Posterior vena cava (tissue), 2 donors: ENCODE measurements at regions of chr16 and their contacts with region 1.

Region 1: GRCh38 chr16:23784811-23785447 is 30.1 kb downstream of the CHP2 start:
- DNase-seq: no peak

Region 2: DNA sequence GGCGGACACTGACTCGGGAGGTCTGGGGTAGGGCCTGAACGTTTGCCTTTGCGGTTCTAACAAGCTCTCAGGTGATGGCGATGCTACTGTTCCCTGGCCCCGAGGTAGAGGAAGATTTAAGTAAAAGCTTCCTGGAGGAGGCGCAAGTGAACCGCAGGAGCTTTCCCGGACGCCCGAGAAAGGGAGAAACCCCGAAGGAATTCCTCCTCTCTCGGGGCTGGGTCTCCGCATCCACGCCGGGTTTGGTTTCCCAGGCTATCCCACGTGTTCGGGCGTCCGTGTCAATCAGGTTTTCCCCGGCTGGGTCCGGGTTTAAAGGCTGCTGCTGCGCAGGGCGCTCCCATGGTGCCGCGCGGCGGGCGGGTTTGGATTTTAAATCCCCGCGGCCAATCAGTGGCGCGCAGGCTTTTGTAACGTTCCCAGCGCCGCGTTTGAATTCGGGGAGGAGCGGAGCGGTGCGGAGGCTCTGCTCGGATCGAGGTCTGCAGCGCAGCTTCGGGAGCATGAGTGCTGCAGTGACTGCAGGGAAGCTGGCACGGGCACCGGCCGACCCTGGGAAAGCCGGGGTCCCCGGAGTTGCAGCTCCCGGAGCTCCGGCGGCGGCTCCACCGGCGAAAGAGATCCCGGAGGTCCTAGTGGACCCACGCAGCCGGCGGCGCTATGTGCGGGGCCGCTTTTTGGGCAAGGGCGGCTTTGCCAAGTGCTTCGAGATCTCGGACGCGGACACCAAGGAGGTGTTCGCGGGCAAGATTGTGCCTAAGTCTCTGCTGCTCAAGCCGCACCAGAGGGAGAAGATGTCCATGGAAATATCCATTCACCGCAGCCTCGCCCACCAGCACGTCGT is 106.3 kb before region 1 on chr16 and contains the start of gene PLK1:
- intact Hi-C with region 1: no loop called
- DNase-seq: peak; percentile 94
- total RNA-seq, gene PLK1: 0.67 to 1.8 TPM

Region 3: GRCh38 chr16:23757937-23758619 is 26.9 kb before region 1 on chr16:
- intact Hi-C with region 1: loop called in 1 of 2 experiments (anchors 2 kb)
- DNase-seq: peak; percentile 7

Region 4: GRCh38 chr16:23952128-23952970 is 167.4 kb after region 1 on chr16:
- intact Hi-C with region 1: no loop called
- DNase-seq: no peak